ENCODE measurements at regions of chr9 and their contacts with region 1.

Region 1: GRCh38 chr9:38088006-38088925 is 19.2 kb upstream of the SHB start:
- DNase-seq: no peak
- H3K4me3 ChIP-seq: no peak overlapping the region
- H3K27me3 ChIP-seq: no peaks in the 10 kb centered on the region; the same call in 1 of the 2 replicates
- CTCF ChIP-seq: peak; percentile 97

Region 2: DNA sequence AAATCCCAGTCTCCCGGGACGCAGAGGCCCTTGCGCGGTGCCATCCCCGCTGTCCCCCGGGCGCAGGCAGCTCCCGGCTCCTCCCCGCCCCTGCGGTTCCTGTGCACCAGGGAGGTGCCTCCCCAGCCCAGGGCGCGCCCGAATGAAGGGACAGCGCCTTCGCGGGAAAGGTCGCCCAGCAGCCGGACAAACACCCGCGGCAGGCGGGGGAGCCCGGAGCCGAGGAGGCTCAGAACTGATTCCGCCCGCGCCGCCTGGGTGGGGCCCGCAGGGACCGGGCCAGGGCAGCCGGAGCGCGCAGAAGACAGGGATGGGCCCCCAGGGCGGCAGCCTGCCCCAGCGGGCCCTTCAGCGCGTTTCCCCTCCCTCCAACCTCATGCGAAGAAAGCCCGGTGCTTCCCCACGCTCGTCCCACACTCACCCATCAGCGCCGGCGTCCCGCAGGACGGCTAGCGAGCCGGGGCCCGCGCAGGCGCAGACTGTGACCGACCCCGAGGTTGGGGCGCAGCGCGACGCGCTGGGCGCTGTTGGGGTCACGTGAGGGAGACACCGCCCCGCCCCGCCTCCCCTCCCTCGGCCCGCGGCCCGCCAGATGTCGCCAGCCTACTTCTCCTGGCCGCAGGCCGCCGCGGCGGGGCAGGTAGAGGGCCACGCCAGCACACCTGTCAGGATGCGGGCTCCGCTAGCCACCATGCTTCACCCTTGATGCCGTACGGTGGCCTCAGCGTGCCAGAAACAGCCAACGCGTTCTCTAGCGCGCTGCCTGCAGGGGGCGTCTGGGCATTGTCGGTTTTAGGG is 184.4 kb before region 1 on chr9 and contains the start of gene SLC25A51:
- CTCF ChIA-PET with region 1: interaction called, 8 read pairs
- POLR2A ChIA-PET with region 1: interaction called, 18 read pairs
- DNase-seq: peak; percentile 44
- H3K4me3 ChIP-seq: peak within 1 kb of the TSS; percentile 84
- H3K27me3 ChIP-seq: no peaks in the 10 kb centered on the region
- CTCF ChIP-seq: peak; percentile 98
- polyA plus RNA-seq, gene SLC25A51: 15.6 and 24.4 TPM in 2 replicates

Region 3: GRCh38 chr9:38017149-38017884 is 70.9 kb before region 1 on chr9:
- CTCF ChIA-PET with region 1: interaction called, 16 read pairs
- POLR2A ChIA-PET with region 1: no interaction called
- DNase-seq: no peak
- H3K4me3 ChIP-seq: no peak overlapping the region
- H3K27me3 ChIP-seq: no peaks in the 10 kb centered on the region
- CTCF ChIP-seq: peak; percentile 23; the same call in 1 of the 2 replicates

Region 4: GRCh38 chr9:38068866-38069629 is 19.2 kb before region 1 on chr9 and contains the start of gene SHB:
- CTCF ChIA-PET with region 1: interaction called, 19 read pairs
- POLR2A ChIA-PET with region 1: no interaction called
- DNase-seq: no peak
- H3K4me3 ChIP-seq: peak within 1 kb of the TSS; percentile 88
- H3K27me3 ChIP-seq: no peaks in the 10 kb centered on the region
- CTCF ChIP-seq: no peak
- polyA plus RNA-seq, gene SHB: 14.0 and 18.6 TPM in 2 replicates

Region 5: DNA sequence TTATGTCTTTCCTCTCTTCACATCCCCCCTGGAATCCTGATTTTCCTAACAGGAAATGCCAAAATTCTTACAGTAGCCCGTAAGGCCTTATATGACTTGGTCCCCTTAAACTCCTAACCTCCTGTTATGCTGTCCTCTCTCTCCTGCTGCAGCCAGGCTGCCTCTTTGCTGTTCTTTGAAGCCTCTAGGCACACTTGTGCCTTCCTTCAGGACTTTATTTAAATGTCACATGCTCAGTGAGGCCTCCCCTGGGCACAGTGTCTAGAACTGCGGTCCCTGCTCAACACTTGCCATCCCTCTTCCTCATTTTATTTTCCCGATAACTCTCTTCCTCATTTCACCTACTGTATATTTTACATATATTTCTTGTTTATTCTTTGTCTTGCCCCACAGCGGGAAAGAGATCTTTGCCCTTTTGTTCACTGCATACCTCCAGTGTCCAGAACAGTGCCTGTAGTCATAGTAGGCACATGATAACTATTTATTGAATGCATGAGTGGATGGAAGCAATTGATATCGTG is 13.8 kb before region 1 on chr9:
- CTCF ChIA-PET with region 1: interaction called, 19 read pairs
- POLR2A ChIA-PET with region 1: no interaction called
- DNase-seq: no peak
- H3K4me3 ChIP-seq: no peak overlapping the region
- H3K27me3 ChIP-seq: no peaks in the 10 kb centered on the region
- CTCF ChIP-seq: no peak

Region 6: GRCh38 chr9:38106488-38106887 is 18.2 kb after region 1 on chr9:
- CTCF ChIA-PET with region 1: interaction called, 13 read pairs
- POLR2A ChIA-PET with region 1: no interaction called
- DNase-seq: no peak
- H3K4me3 ChIP-seq: no peak overlapping the region
- H3K27me3 ChIP-seq: peaks cover 6% of the 10 kb centered on the region; the same call in 1 of the 2 replicates
- CTCF ChIP-seq: no peak

Region 7: DNA sequence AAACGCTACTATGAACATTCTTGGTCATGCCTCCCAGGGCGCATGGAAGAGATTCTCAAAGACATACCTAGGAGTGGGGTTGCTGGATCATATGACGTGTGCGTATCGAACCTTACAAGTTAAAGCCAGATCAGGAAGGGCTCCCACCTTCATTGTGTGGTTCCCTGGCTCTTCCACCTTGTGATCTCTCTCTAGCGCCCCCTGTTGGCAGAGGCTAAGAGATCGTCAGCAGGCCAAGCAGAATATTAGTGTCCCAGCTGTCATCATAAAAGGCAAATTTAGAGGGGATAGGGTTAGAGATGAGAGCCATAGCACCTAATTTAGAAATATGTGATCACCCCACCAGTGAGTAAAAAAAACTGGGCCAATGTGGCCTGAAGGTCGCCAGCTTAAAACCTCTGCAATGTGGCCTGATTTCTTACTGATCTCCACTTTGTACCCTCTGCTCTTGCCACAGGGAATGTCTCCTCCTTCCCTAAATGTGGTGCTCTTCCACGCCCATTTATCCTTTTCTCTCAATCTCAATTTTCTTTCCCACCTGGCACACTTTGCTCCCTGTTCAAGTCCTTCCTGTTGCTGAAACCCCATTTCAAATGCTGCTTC is 72.4 kb after region 1 on chr9:
- CTCF ChIA-PET with region 1: interaction called, 33 read pairs
- POLR2A ChIA-PET with region 1: no interaction called
- DNase-seq: no peak
- H3K4me3 ChIP-seq: no peak overlapping the region
- H3K27me3 ChIP-seq: peaks cover 7% of the 10 kb centered on the region
- CTCF ChIP-seq: peak; percentile 92